ENCODE measurements at regions of chr5 and their contacts with region 1.

Region 1: DNA sequence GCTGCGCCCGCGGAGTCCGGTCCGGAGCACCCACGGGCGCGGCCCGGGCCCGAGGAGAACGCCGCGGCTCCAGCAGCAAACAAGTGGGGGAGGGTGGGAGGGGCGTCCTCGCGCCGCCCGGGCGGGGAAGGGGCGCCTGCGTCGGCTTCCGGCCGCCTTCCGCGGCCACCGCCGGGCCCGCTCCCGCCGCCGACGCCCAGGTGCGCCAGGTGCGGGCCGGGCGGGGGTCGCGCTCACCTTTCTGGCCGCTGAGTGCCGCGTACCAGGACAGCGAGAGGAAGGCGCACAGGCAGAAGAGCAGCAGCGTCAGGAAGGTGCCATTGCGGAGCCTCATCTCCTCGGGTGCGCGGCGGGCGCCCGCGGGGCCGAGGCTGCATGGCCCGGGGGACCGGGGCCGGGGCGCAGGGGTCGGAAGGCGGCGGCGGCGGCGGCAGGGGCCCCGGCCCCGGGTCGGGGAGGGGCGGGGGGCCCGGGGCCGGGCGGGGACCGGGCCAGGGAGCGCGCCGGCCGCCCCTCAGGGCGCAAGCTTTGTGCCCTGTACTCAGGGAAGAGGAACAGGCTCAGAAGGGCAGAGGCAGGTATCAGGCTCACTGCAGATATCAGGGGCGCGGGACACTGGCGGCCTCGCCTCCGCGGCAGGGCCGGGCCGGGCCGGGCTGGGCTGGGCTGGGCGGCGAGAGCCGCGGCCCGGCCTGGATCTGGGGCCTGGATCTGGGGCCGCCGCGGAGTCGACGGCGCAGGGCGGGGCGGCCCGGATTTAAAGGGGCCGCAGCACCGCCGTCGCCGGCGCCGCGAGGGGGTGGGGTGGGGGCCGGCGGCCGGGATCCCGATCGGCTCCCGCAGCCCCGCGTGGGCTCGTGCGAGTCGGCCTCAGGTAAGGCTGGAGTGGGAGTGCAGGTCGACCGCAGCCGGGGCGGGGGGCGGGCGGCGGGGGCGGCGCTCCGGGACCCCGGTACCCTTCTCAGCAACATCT is at the start of gene MGAT4B:
- DNase-seq: peak in 1 of 2 donors; percentile 84
- H3K4me3 ChIP-seq: peak within 1 kb of the TSS; percentile 78 to 87
- H3K27ac ChIP-seq: peak within 1 kb of the TSS; percentile 91
- H3K4me1 ChIP-seq: peaks cover 10 to 21% of the 10 kb centered on the region in 2 donors
- H3K27me3 ChIP-seq: no peaks in the 10 kb centered on the region
- CTCF ChIP-seq: no peak
- total RNA-seq, gene MGAT4B: 207 TPM

Region 2: GRCh38 chr5:179858586-179859427 is 52.3 kb after region 1 on chr5 and contains the start of gene MRNIP:
- intact Hi-C with region 1: loop called (anchors 1 kb)
- DNase-seq: peak; percentile 83 to 98
- H3K4me3 ChIP-seq: peak within 1 kb of the TSS; percentile 79 to 93
- H3K27ac ChIP-seq: peak within 1 kb of the TSS; percentile 78 to 86
- H3K4me1 ChIP-seq: peaks cover 0 to 8% of the 10 kb centered on the region in 2 donors
- H3K27me3 ChIP-seq: no peaks in the 10 kb centered on the region
- CTCF ChIP-seq: peak in 1 of 3 experiments; percentile 33
- total RNA-seq, gene MRNIP: 17.3 TPM

Region 3: DNA sequence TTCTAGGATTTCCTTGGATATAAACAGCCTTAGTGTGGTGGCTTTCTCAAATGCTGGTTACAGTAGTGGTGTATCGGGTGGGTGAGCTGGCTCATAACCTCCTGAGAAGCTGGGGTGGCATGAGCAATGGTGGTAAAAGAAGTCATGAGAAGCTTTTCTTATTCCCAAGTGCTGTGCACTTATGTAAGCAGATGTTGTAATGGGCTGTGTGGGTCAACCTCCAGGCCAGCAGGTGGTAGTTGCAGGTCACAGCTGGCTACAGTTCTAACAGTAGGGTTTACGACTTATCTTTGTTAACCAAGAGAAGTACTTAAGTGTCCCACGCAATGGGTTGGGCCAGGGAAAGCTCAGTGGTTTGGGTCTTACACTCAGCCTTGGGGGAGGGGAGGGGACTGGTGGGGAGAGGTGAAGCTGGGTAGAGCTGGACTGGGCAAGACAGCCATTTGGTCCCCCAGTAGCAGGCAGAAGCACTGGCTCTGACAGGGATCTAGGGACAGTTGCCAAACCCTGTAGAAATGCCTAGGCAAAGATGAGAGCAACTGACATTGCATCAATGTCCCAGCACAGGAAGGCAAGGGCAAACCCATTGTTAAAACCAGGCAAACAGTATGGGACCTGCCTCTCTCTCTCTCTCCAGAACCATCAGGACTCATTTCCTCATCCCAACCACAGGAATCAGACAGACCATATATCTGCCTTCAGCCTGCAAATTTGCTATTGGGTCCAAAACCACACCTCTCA is 188.2 kb after region 1 on chr5:
- intact Hi-C with region 1: no loop called
- DNase-seq: no peak
- H3K4me3 ChIP-seq: no peak overlapping the region
- H3K27ac ChIP-seq: no peak overlapping the region
- H3K4me1 ChIP-seq: no peaks in the 10 kb centered on the region
- H3K27me3 ChIP-seq: no peaks in the 10 kb centered on the region
- CTCF ChIP-seq: no peak

Measured in ascending aorta (tissue), 2 donors.